HepG2 (cell line): ENCODE measurements at regions of chr10 and their contacts with region 1.

Region 1: DNA sequence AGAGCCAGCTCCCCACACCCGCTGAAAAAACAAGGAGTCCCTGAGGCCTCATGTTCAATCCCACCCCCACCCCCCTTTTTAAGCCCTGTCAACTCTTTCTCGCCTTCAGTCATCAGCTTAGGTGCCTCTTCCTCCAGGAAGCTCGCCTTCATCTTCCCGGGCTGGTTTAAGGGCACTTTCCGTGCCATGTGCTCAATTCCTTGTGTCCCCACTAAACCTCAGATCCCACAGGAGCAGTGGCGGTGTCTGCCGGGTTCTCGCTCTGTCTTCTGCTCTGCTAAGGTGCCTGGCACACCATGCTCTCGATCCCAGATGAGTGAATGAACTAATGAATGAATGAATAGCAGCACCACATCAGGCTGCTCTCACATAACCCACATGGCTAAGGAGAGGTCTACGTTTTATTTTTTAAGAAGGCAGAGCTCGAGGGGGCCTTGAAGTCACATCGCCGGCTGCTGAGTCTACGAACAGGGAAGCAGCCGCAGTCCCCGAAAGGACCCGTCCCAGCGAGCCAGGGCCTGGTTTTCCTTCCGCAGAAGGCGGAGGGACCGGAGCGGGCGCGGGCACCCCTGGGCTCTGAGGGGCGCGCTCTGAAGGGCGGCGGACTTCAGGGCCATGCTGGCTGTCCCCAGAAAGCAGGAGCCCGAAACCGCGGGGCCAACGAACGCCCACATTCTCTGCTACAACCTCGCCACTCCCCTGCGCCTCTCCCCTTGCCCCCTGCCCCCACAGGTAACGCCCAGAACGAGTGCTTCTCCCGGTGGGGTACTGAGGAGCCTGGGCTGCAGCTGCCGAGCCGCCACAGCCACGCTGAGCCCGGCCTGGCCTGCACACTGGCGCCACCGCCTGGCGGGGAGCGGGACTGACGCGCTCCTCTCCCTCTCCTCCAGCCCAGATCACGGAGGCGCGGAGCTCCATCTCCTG is 73.4 kb upstream of the KCNMA1 start:
- DNase-seq: peak; percentile 5
- ATAC-seq: peak; percentile 98
- H3K4me3 ChIP-seq: peak overlapping the region in 1 of 3 experiments; percentile 16; a peak in 1 of 6 replicates
- H3K27ac ChIP-seq: no peak overlapping the region
- H3K4me1 ChIP-seq: no peaks in the 10 kb centered on the region
- H3K27me3 ChIP-seq: peaks cover 6 to 37% of the 10 kb centered on the region in 2 experiments
- CTCF ChIP-seq: peak; percentile 96
- EP300 ChIP-seq: no peak
- POLR2A ChIP-seq: no peak
- RAD21 ChIP-seq: peak; percentile 70

Region 2: GRCh38 chr10:77173615-77174461 is 537.2 kb before region 1 on chr10:
- CTCF ChIA-PET with region 1: interaction called, 5 read pairs
- POLR2A ChIA-PET with region 1: no interaction called
- in situ Hi-C with region 1: loop called (anchors 10 kb)
- intact Hi-C with region 1: loop called (anchors 1 kb)
- DNase-seq: peak; percentile 61
- ATAC-seq: peak; percentile 90
- H3K4me3 ChIP-seq: no peak overlapping the region
- H3K27ac ChIP-seq: no peak overlapping the region
- H3K4me1 ChIP-seq: no peaks in the 10 kb centered on the region
- H3K27me3 ChIP-seq: no peaks in the 10 kb centered on the region
- CTCF ChIP-seq: peak; percentile 88
- EP300 ChIP-seq: no peak
- POLR2A ChIP-seq: no peak
- RAD21 ChIP-seq: peak; percentile 68

Region 3: DNA sequence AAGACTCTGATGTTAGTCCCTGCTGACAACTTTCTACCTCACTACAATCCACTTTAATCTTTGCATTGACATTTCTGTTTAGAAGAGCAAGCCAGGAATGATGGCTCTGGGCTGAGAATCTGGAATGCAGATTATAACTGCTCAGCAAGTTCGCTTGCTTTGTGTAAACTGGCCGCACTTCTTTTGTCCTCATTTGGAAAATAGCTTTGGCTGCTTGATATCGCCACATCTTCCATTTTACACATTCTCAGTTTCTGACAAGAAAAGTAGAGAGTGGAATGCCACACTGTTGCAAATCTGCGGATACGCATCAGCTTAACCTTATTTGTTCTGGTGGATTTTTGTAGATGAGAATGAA is 503.2 kb before region 1 on chr10:
- CTCF ChIA-PET with region 1: no interaction called
- POLR2A ChIA-PET with region 1: no interaction called
- in situ Hi-C with region 1: no loop called
- intact Hi-C with region 1: no loop called
- DNase-seq: no peak
- ATAC-seq: no peak
- H3K4me3 ChIP-seq: no peak overlapping the region
- H3K27ac ChIP-seq: no peak overlapping the region
- H3K4me1 ChIP-seq: no peaks in the 10 kb centered on the region
- H3K27me3 ChIP-seq: peaks cover 0 to 3% of the 10 kb centered on the region in 2 experiments; a peak in 2 of 5 replicates
- CTCF ChIP-seq: no peak
- EP300 ChIP-seq: no peak
- POLR2A ChIP-seq: no peak
- RAD21 ChIP-seq: no peak

Region 4: GRCh38 chr10:77653210-77653609 is 57.8 kb before region 1 on chr10:
- CTCF ChIA-PET with region 1: no interaction called
- POLR2A ChIA-PET with region 1: no interaction called
- in situ Hi-C with region 1: no loop called
- intact Hi-C with region 1: no loop called
- DNase-seq: no peak
- ATAC-seq: no peak
- H3K4me3 ChIP-seq: no peak overlapping the region
- H3K27ac ChIP-seq: no peak overlapping the region
- H3K4me1 ChIP-seq: peaks cover 7% of the 10 kb centered on the region
- H3K27me3 ChIP-seq: no peaks in the 10 kb centered on the region
- CTCF ChIP-seq: no peak
- EP300 ChIP-seq: no peak
- POLR2A ChIP-seq: no peak
- RAD21 ChIP-seq: no peak

Region 5: GRCh38 chr10:77756319-77757232 is 45.6 kb after region 1 on chr10:
- CTCF ChIA-PET with region 1: interaction called, 8 read pairs
- POLR2A ChIA-PET with region 1: no interaction called
- in situ Hi-C with region 1: loop called (anchors 5 kb)
- intact Hi-C with region 1: loop called (anchors 1 kb)
- DNase-seq: peak; percentile 59
- ATAC-seq: peak; percentile 95
- H3K4me3 ChIP-seq: no peak overlapping the region
- H3K27ac ChIP-seq: no peak overlapping the region
- H3K4me1 ChIP-seq: no peaks in the 10 kb centered on the region
- H3K27me3 ChIP-seq: no peaks in the 10 kb centered on the region
- CTCF ChIP-seq: peak; percentile 76
- EP300 ChIP-seq: no peak
- POLR2A ChIP-seq: no peak
- RAD21 ChIP-seq: peak; percentile 55; the same call in 1 of the 2 replicates

Region 6: DNA sequence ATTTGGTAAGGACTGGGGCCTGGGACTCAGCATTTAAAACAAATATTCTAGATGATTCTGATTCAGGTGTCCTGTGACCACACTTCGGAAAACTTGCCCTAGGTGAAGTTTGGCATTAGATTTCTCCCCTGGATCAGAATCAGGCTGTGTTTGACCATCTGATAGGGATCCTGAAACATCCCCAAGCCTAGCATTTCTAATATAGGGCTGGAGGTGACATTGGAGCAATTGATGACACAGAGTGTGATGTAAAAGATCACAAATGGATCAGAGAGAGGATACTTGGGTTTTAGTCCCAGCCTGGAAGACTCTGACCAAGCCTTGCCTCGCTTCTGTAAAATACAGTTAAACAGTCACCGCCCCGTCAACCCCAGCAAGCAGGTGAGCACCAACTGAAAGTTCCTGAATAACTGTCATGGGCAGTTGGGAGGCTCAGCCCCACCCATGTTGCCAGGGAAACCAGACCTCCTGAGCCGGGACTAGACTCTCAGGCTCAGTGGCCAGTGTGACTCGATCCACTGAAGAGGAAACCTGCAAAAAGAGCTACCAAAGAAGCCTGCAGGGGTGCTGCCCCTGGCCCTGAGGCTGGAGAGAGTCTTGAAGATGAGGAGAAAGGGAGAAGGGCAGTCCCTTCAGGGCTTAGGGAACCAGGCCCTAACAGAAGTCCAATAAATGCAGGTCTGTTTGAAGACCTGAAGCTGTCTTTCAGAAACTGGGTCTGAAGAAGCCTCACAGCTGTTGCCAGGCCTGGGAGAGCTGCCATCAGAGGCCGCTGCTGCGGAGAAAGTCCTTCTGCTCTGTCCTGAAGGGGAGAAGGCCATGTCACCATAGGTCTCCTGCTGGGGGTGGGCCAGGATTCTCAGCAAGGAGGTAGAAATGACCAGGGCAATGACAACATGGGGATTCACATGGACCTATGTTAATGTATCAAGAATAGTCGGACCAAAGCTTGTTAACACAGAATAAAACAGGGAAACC is 52.7 kb after region 1 on chr10:
- CTCF ChIA-PET with region 1: no interaction called
- POLR2A ChIA-PET with region 1: no interaction called
- in situ Hi-C with region 1: loop called (anchors 5 kb)
- intact Hi-C with region 1: no loop called
- DNase-seq: no peak
- ATAC-seq: peak; percentile 82
- H3K4me3 ChIP-seq: no peak overlapping the region
- H3K27ac ChIP-seq: no peak overlapping the region
- H3K4me1 ChIP-seq: peaks cover 6% of the 10 kb centered on the region; the same call in 1 of the 2 replicates
- H3K27me3 ChIP-seq: no peaks in the 10 kb centered on the region
- CTCF ChIP-seq: no peak
- EP300 ChIP-seq: no peak
- POLR2A ChIP-seq: no peak
- RAD21 ChIP-seq: no peak

Region 7: GRCh38 chr10:78316451-78316931 is 605.5 kb after region 1 on chr10:
- CTCF ChIA-PET with region 1: no interaction called
- POLR2A ChIA-PET with region 1: no interaction called
- in situ Hi-C with region 1: no loop called
- intact Hi-C with region 1: no loop called
- DNase-seq: no peak
- ATAC-seq: no peak
- H3K4me3 ChIP-seq: no peak overlapping the region
- H3K27ac ChIP-seq: no peak overlapping the region
- H3K4me1 ChIP-seq: peaks cover 12% of the 10 kb centered on the region
- H3K27me3 ChIP-seq: peaks cover 0 to 11% of the 10 kb centered on the region in 2 experiments; a peak in 3 of 5 replicates
- CTCF ChIP-seq: no peak
- EP300 ChIP-seq: no peak
- POLR2A ChIP-seq: no peak
- RAD21 ChIP-seq: no peak